ENCODE measurements at regions of chr4 and their contacts with region 1.

Region 1: DNA sequence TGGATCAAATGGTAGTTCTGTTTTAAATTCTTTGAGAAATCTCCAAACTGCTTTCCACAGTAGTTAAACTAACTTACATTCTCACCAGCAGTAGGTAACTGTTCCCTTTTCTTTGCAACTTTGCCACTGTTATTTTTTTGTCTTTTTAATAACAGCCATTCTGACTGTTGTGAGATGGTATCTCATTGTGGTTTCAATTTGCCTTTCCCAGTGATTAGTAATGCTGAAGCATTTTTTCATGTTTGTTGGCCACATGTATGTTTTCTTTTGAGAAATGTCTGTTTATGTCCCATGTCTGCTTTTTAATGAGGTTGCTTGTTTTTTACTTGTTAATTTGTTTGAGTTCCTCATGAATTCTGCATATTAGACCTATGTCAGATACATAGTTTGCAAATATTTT is 198.8 kb downstream of the RAB28 start:
- DNase-seq: no peak
- H3K4me3 ChIP-seq: no peak overlapping the region
- H3K27ac ChIP-seq: no peak overlapping the region
- H3K4me1 ChIP-seq: no peaks in the 10 kb centered on the region
- H3K27me3 ChIP-seq: no peaks in the 10 kb centered on the region
- CTCF ChIP-seq: no peak
- EP300 ChIP-seq: no peak
- POLR2A ChIP-seq: no peak

Region 2: GRCh38 chr4:13261486-13262257 is 23.7 kb before region 1 on chr4:
- in situ Hi-C with region 1: no loop called
- intact Hi-C with region 1: loop called (anchors 1 kb)
- DNase-seq: no peak
- H3K4me3 ChIP-seq: no peak overlapping the region
- H3K27ac ChIP-seq: no peak overlapping the region
- H3K4me1 ChIP-seq: no peaks in the 10 kb centered on the region
- H3K27me3 ChIP-seq: no peaks in the 10 kb centered on the region
- CTCF ChIP-seq: no peak
- EP300 ChIP-seq: no peak
- POLR2A ChIP-seq: no peak